PC-9 (cell line): ENCODE measurements at regions of chr11 and their contacts with region 1.

Region 1: DNA sequence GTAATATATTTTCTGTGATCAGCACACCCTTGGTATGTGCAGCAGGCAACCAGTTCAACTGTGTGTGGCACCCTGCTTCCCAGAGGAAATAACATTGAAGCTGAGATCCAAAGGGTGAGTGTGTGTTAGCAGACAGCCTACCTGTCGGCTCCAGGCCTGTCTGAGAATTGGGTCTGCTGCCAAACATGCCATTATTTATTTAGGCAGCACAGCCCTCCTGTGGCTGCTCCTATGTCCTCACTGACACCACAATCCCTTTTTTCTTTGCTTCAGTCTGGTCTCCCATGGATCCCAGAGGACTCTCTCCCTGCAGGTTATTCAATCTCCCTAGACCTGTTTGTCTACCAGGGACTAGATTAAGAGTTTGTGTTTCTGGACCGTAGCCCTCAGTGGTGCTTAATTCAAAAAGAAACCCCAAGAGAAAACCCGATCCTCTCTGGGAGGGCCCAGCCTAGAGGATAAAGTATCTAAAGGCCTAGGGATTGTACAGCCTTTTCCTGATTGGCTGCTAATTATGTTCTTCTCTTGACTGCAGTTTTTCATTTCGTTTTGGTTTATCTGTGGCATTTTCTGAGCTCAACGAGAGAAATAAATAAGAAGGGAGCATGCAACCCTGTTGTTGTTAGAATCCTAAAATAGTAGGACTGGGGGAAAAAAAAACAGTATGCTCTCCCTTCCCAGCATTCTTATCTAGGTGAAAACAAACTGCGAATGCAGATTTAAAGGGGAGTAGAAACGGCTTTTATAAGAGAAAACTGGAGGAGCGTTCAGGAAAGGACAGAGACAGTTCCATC is 24.1 kb downstream of the KCNE3 start:
- DNase-seq: peak; percentile 57 to 58
- H3K4me3 ChIP-seq: no peak overlapping the region
- H3K27ac ChIP-seq: no peak overlapping the region
- H3K4me1 ChIP-seq: peaks cover 7% of the 10 kb centered on the region; the same call in 1 of the 2 replicates
- H3K27me3 ChIP-seq: no peaks in the 10 kb centered on the region
- CTCF ChIP-seq: peak; percentile 54

Region 2: GRCh38 chr11:73734993-73735392 is 708.3 kb before region 1 on chr11:
- CTCF ChIA-PET with region 1: interaction called, 13 read pairs
- POLR2A ChIA-PET with region 1: no interaction called
- intact Hi-C with region 1: no loop called
- DNase-seq: no peak
- H3K4me3 ChIP-seq: no peak overlapping the region
- H3K27ac ChIP-seq: peak overlapping the region; percentile 25; the same call in 1 of the 2 replicates
- H3K4me1 ChIP-seq: no peaks in the 10 kb centered on the region
- H3K27me3 ChIP-seq: no peaks in the 10 kb centered on the region
- CTCF ChIP-seq: no peak